CD8-positive, alpha-beta T cell (primary cell): ENCODE measurements at regions of chr2 and their contacts with region 1.

Region 1: DNA sequence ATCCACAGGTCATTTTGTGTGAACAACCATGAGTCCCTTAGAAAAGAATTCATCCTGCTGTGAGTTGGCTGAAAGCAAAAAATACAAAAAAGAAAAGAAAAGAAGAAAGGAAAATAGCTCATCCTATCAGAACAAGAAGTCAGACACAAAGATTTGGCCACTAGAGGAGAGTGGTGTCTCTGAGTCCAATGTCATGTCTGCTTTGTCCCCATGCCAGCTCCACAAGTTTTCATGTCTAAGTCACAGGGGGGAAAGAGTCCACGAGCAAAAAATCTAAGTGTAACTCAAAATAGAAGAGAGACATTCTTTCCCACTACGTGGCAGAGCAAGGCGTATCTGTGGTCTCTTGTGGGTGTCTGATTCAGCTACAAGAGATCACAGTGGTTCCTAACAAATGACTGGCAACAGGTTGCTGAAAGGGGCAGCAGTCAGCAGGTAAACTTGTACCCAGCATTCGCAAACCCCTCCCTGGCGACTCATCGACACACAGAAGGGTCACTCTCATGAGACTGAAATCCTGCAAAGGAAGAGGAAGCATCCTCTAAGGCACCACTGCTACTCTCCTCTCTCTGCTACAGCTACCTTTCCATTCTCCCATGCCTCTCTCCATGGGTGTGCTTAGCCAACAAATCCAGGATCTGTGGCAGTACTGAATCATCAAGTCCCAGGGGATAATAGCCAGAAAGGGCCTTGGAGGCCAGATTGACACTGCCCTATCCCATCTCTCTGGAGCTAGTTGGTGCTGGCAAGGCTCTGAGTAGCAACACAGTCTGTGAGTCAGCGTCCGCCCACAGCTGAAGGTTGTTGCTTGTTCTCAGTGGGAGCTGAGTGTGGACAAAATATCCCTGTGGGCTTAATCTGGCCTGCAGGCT is 123.0 kb upstream of the SLC39A10 start:
- DNase-seq: peak; percentile 7 to 70 (median 60)
- ATAC-seq: peak; percentile 63
- H3K4me3 ChIP-seq: peak overlapping the region; percentile 11 to 53
- H3K4me3 Mint-ChIP-seq: peak overlapping the region; percentile 79
- H3K27ac ChIP-seq: peak overlapping the region; percentile 52 to 66
- H3K27ac Mint-ChIP-seq: peak overlapping the region; percentile 98
- H3K4me1 ChIP-seq: peaks cover 79% of the 10 kb centered on the region
- H3K4me1 Mint-ChIP-seq: peaks cover 81% of the 10 kb centered on the region
- H3K27me3 ChIP-seq: no peaks in the 10 kb centered on the region
- H3K27me3 Mint-ChIP-seq: no peaks in the 10 kb centered on the region
- CTCF ChIP-seq: no peak

Region 2: DNA sequence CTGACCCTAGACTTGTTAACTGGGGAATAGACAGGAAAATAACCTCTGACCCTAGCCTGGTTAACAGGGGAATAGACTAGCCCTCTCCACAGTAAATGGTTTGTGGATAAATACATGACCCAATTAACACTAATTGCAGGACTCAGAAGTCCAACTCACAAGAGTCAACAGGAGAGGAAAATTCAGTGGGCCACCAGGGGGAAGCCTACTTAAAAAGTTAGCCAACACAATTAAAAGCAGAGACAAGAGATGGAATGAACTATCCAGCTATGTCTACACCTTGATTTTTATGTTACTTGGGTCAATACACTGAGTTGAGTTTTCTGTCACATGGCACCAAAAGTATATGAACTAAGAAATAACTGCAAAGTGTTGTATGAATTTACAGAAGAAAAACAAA is 35.8 kb before region 1 on chr2:
- CTCF ChIA-PET with region 1: interaction called, 24 read pairs
- POLR2A ChIA-PET with region 1: interaction called, 13 read pairs
- intact Hi-C with region 1: loop called in 1 of 2 experiments (anchors 2 kb)
- DNase-seq: peak; percentile 20 to 78 (median 66)
- ATAC-seq: peak; percentile 51
- H3K4me3 ChIP-seq: no peak overlapping the region
- H3K4me3 Mint-ChIP-seq: no peak overlapping the region
- H3K27ac ChIP-seq: no peak overlapping the region
- H3K27ac Mint-ChIP-seq: no peak overlapping the region
- H3K4me1 ChIP-seq: peaks cover 15% of the 10 kb centered on the region
- H3K4me1 Mint-ChIP-seq: peaks cover 47% of the 10 kb centered on the region
- H3K27me3 ChIP-seq: no peaks in the 10 kb centered on the region
- H3K27me3 Mint-ChIP-seq: no peaks in the 10 kb centered on the region
- CTCF ChIP-seq: peak; percentile 52

Region 3: GRCh38 chr2:195520671-195521155 is 13.3 kb before region 1 on chr2:
- CTCF ChIA-PET with region 1: interaction called, 5 read pairs
- POLR2A ChIA-PET with region 1: interaction called, 3 read pairs
- intact Hi-C with region 1: loop called in 1 of 2 experiments (anchors 2 kb)
- DNase-seq: no peak
- ATAC-seq: no peak
- H3K4me3 ChIP-seq: no peak overlapping the region
- H3K4me3 Mint-ChIP-seq: no peak overlapping the region
- H3K27ac ChIP-seq: no peak overlapping the region
- H3K27ac Mint-ChIP-seq: no peak overlapping the region
- H3K4me1 ChIP-seq: no peaks in the 10 kb centered on the region
- H3K4me1 Mint-ChIP-seq: peaks cover 42% of the 10 kb centered on the region
- H3K27me3 ChIP-seq: no peaks in the 10 kb centered on the region
- H3K27me3 Mint-ChIP-seq: no peaks in the 10 kb centered on the region
- CTCF ChIP-seq: no peak

Region 4: DNA sequence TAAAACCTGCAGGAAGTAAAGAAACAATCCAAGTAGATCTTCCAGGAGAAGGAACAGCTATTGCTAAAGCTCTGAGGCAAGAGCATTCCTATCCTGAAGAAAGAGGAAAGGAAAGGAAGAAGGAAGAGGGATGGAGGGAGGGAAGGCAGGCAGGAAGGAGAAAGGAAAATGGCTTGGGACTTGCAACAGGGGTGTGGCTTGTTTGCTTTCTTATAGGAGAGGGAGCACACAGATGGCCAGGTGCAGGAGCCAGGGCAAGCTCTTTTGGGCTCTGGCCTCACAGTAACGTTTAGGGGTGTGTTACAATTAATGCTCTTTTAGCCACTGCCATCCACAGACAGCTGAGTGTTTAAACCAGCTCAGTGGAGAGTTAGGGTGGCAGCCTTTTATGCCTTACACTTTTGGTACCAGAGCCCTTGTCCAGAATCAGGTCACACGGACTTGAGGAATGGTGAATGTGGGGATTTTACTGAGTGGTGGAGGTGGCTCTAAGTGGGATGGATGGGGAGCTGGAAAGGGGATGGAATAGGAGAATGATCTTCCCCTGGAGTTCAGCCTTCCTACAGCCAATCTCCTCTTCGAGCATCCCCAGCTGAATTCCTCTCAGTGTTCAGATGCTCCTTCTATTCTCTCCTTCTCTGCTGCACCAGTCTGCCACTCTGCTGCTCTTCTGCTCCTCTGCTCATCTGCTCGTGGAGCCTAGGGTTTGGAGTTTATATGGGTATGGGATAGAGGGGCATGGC is 14.4 kb after region 1 on chr2:
- CTCF ChIA-PET with region 1: interaction called, 12 read pairs
- POLR2A ChIA-PET with region 1: interaction called, 5 read pairs
- intact Hi-C with region 1: no loop called
- DNase-seq: no peak
- ATAC-seq: no peak
- H3K4me3 ChIP-seq: no peak overlapping the region
- H3K4me3 Mint-ChIP-seq: no peak overlapping the region
- H3K27ac ChIP-seq: no peak overlapping the region
- H3K27ac Mint-ChIP-seq: peak overlapping the region; percentile 33
- H3K4me1 ChIP-seq: peaks cover 17% of the 10 kb centered on the region
- H3K4me1 Mint-ChIP-seq: peaks cover 35% of the 10 kb centered on the region
- H3K27me3 ChIP-seq: no peaks in the 10 kb centered on the region
- H3K27me3 Mint-ChIP-seq: no peaks in the 10 kb centered on the region
- CTCF ChIP-seq: no peak

Region 5: DNA sequence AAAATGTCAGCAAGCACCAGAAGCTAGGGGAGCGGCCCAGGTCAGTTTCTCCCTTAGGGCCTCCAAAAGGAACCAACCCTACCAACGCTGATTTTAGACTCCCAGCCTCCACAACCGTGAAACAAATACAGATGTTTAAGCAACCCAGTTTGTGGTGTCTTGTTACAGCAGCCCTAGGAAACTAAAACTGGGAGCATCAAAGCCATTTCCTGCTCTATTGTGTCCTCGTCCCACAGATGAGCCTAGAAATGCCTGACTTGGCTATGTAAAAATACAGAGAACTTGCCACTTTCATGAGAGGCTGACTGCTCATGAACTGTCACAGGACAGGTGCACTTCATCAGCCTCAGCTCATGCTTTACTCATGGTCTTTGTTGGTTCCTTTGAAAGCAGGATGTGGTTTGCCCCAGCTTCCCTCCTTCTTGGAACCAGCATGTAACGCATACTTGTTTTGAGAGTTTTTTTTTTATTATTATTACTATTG is 25.5 kb after region 1 on chr2:
- CTCF ChIA-PET with region 1: interaction called, 39 read pairs
- POLR2A ChIA-PET with region 1: interaction called, 60 read pairs
- intact Hi-C with region 1: loop called (anchors 1 kb)
- DNase-seq: peak; percentile 42 to 93 (median 73)
- ATAC-seq: peak; percentile 87
- H3K4me3 ChIP-seq: peak overlapping the region in 1 of 2 experiments; percentile 17
- H3K4me3 Mint-ChIP-seq: peak overlapping the region; percentile 42
- H3K27ac ChIP-seq: peak overlapping the region; percentile 63 to 75
- H3K27ac Mint-ChIP-seq: peak overlapping the region; percentile 89
- H3K4me1 ChIP-seq: peaks cover 66% of the 10 kb centered on the region
- H3K4me1 Mint-ChIP-seq: peaks cover 69% of the 10 kb centered on the region
- H3K27me3 ChIP-seq: no peaks in the 10 kb centered on the region
- H3K27me3 Mint-ChIP-seq: no peaks in the 10 kb centered on the region
- CTCF ChIP-seq: no peak

Region 6: DNA sequence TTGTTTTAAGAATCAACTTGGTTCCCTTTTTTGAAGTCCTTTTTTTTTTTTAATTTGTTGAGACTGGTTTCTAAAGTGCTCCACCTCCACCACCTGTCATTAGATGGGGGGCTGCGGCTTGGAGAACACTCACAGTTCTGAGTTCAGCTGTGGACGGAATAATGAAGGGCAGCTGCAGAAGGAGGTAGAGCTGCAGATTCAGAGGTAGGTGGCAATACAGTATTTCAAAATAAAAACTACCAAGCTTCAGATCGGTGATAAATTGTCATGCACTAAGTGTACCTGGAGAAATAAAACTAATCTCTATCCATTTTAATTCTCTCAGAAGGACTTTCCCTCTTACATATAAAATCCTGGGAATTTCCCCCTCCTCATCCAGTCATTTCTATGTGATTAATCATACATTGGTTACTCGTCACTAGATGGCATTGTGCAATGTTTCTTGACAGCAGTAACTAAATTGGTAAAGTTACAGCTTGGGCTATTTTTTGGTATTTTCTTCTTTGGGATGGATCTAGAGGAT is 41.9 kb after region 1 on chr2:
- CTCF ChIA-PET with region 1: interaction called, 4 read pairs
- POLR2A ChIA-PET with region 1: no interaction called
- intact Hi-C with region 1: loop called in 1 of 2 experiments (anchors 5 kb)
- DNase-seq: peak in 2 of 9 experiments; percentile 43 to 64
- ATAC-seq: peak; percentile 57
- H3K4me3 ChIP-seq: no peak overlapping the region
- H3K4me3 Mint-ChIP-seq: peak overlapping the region; percentile 66
- H3K27ac ChIP-seq: no peak overlapping the region
- H3K27ac Mint-ChIP-seq: peak overlapping the region; percentile 84
- H3K4me1 ChIP-seq: peaks cover 51% of the 10 kb centered on the region
- H3K4me1 Mint-ChIP-seq: peaks cover 76% of the 10 kb centered on the region
- H3K27me3 ChIP-seq: no peaks in the 10 kb centered on the region
- H3K27me3 Mint-ChIP-seq: no peaks in the 10 kb centered on the region
- CTCF ChIP-seq: peak; percentile 6

Region 7: GRCh38 chr2:196182439-196183171 is 648.6 kb after region 1 on chr2:
- CTCF ChIA-PET with region 1: no interaction called
- POLR2A ChIA-PET with region 1: no interaction called
- intact Hi-C with region 1: loop called (anchors 10 kb)
- DNase-seq: peak in 2 of 9 experiments; percentile 60 to 77
- ATAC-seq: peak; percentile 22
- H3K4me3 ChIP-seq: no peak overlapping the region
- H3K4me3 Mint-ChIP-seq: peak overlapping the region; percentile 68
- H3K27ac ChIP-seq: peak overlapping the region; percentile 20 to 88
- H3K27ac Mint-ChIP-seq: peak overlapping the region; percentile 92
- H3K4me1 ChIP-seq: peaks cover 70% of the 10 kb centered on the region
- H3K4me1 Mint-ChIP-seq: peaks cover 88% of the 10 kb centered on the region
- H3K27me3 ChIP-seq: no peaks in the 10 kb centered on the region
- H3K27me3 Mint-ChIP-seq: no peaks in the 10 kb centered on the region
- CTCF ChIP-seq: no peak